ENCODE measurements at regions of chr17 and their contacts with region 1.

Region 1: DNA sequence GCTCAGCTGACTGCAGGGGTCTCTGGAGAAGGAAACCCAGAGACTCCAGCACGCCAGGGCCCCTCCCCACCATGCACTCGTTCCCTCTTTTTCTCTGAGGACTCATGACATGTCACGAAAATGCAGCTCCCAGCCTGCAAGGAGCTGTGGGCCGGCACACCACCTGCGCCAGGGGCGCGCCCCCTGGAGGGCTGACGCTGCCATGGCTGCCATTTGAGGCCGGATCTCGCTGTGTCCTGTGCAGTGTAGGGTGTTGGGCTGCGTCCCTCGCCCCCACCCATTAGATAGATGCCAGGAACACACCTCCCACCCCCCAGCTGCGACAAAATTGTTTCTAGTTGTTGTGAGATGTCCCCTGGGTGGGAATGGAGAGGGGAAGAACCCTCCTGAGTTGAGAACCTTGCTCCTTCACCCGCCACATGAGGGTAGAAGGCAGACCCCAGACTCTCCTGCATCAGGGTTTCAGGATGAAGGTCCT is 8.2 kb downstream of the SYNGR2 start:
- DNase-seq: peak; percentile 26
- H3K4me3 ChIP-seq: no peak overlapping the region
- H3K27ac ChIP-seq: no peak overlapping the region
- H3K4me1 ChIP-seq: peaks cover 4% of the 10 kb centered on the region
- H3K27me3 ChIP-seq: no peaks in the 10 kb centered on the region
- CTCF ChIP-seq: peak; percentile 86 to 98

Region 2: DNA sequence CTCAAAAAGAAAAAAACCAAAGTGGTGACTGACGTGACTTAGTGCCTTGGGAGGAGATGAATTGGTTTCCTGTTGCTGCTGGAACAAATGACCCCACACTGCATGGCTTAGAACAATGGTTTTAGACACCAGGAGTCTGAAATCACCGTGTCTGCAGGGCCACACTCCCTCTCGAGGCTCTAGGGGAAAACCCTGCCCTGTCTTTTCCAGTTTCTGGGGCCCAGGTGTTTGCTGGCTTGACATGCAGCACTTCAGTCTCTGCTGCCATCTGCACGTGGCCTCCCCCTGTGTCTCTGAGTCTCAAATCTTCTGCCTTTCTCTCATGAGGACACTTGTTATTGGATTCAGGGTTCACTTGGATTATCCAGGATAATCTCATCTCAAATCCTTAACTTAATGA is 541.9 kb before region 1 on chr17:
- CTCF ChIA-PET with region 1: no interaction called
- dilution Hi-C with region 1: no loop called
- in situ Hi-C with region 1: no loop called
- intact Hi-C with region 1: no loop called
- DNase-seq: no peak
- H3K4me3 ChIP-seq: no peak overlapping the region
- H3K27ac ChIP-seq: no peak overlapping the region
- H3K4me1 ChIP-seq: no peaks in the 10 kb centered on the region
- H3K27me3 ChIP-seq: no peaks in the 10 kb centered on the region
- CTCF ChIP-seq: no peak

Region 3: DNA sequence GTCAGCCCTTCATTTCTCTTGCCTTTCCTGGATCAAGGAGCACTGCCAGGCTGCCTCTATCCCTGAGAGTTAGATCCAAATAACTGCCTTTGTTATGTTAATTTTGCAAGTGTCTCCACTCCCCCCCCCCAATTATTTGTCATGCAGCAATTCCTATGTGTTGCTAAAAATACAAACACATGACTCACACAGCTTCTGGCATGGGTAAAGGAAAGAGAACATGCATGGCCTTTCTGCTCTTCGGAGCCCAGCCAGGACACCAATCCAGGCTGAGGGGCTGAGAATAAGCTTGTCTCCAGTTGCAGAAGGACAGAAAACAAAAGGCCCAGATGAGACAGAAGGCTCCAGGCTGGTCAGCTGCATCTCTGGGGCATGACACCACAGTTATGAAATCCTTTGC is 366.1 kb before region 1 on chr17:
- CTCF ChIA-PET with region 1: no interaction called
- dilution Hi-C with region 1: loop called (anchors 10 kb)
- in situ Hi-C with region 1: no loop called
- intact Hi-C with region 1: no loop called
- DNase-seq: no peak
- H3K4me3 ChIP-seq: no peak overlapping the region
- H3K27ac ChIP-seq: no peak overlapping the region
- H3K4me1 ChIP-seq: no peaks in the 10 kb centered on the region
- H3K27me3 ChIP-seq: no peaks in the 10 kb centered on the region
- CTCF ChIP-seq: no peak

Region 4: GRCh38 chr17:78019367-78019975 is 157.1 kb before region 1 on chr17:
- CTCF ChIA-PET with region 1: interaction called, 5 read pairs
- dilution Hi-C with region 1: no loop called
- in situ Hi-C with region 1: no loop called
- intact Hi-C with region 1: loop called (anchors 1 kb)
- DNase-seq: no peak
- H3K4me3 ChIP-seq: no peak overlapping the region
- H3K27ac ChIP-seq: no peak overlapping the region
- H3K4me1 ChIP-seq: no peaks in the 10 kb centered on the region
- H3K27me3 ChIP-seq: no peaks in the 10 kb centered on the region
- CTCF ChIP-seq: peak; percentile 50 to 66

Region 5: GRCh38 chr17:78140169-78140976 is 36.2 kb before region 1 on chr17:
- CTCF ChIA-PET with region 1: interaction called, 37 read pairs
- dilution Hi-C with region 1: loop called (anchors 5 kb)
- in situ Hi-C with region 1: no loop called
- intact Hi-C with region 1: no loop called
- DNase-seq: peak; percentile 81
- H3K4me3 ChIP-seq: peak overlapping the region in 1 of 3 experiments; percentile 9
- H3K27ac ChIP-seq: no peak overlapping the region
- H3K4me1 ChIP-seq: peaks cover 32% of the 10 kb centered on the region
- H3K27me3 ChIP-seq: no peaks in the 10 kb centered on the region
- CTCF ChIP-seq: no peak

Region 6: DNA sequence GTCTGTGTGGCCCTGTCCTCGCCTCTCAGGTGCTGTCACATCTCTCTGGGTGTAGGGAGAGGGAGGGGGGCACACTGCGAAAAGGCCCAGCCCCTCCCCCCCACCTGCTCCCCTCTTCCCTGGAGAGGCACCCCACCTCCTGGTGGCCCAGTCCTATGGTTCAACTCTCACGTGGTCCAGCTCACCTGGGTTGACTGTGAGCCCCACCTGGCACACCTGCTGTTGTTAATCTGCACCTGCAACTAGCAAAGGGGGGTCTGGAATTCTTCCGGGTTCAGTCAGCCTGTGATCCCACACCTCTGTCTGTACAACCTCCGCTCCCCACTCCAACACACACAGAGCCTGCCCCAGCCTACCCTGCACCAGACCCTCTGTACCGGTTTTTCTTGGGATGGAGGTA is 10.2 kb before region 1 on chr17:
- CTCF ChIA-PET with region 1: no interaction called
- dilution Hi-C with region 1: no loop called
- in situ Hi-C with region 1: no loop called
- intact Hi-C with region 1: no loop called
- DNase-seq: no peak
- H3K4me3 ChIP-seq: no peak overlapping the region
- H3K27ac ChIP-seq: no peak overlapping the region
- H3K4me1 ChIP-seq: peaks cover 9% of the 10 kb centered on the region
- H3K27me3 ChIP-seq: no peaks in the 10 kb centered on the region
- CTCF ChIP-seq: peak in 1 of 2 donors; percentile 2

Region 7: DNA sequence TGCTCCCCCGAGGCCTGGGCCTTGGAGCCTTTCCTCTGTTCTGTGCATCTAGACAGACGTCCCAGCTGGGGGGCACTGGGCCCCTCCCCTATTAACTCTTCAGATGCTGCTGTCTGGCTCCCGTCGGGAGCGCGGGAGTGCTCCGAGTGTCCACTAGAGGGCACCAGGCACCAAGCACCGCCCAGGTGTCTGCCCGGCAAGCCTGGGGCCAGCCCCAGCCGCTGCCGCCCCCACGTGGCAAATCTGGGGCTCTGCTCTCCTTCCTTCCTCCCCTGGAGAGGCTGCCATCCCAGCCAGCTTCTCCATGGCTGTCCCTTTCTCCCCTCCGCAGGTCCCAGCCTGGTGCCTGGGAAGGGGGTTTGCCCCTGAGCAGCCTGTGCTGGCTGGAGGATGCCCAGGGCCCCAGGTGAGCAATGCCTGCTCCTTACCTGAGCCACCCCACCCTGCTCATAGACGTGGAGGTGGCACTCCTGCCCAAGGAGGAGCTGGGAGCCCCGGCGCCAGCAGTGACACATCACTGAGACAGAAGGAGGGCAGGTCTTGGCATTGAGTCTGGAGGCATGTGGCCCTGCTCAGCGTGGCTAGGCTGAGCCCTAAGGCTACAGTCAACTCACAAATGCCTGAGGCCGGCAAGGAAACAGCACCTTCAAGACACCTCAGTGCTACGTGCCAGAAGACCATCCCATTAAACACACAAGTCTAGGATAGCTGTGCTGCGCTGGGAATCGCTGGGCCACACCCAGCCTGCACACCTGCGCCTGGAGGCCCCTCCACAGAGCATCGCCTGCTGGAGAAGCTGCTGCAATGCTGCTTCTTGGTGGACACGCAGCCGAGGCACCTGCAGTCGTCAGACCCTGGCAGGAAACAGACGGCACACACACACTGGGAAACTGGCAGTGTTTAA is 74.6 kb after region 1 on chr17:
- CTCF ChIA-PET with region 1: interaction called, 3 read pairs
- dilution Hi-C with region 1: no loop called
- in situ Hi-C with region 1: no loop called
- intact Hi-C with region 1: loop called (anchors 1 kb)
- DNase-seq: peak; percentile 81
- H3K4me3 ChIP-seq: peak overlapping the region in 2 of 3 experiments; percentile 27 to 38
- H3K27ac ChIP-seq: no peak overlapping the region
- H3K4me1 ChIP-seq: peaks cover 10% of the 10 kb centered on the region
- H3K27me3 ChIP-seq: no peaks in the 10 kb centered on the region
- CTCF ChIP-seq: peak; percentile 96 to 99